Activated B cell treated with CpG ODN at 0.5 μM for 24 hours (primary cell): ENCODE measurements at regions of chr15 and their contacts with region 1.

Region 1: GRCh38 chr15:67080900-67081431 is 15.6 kb downstream of the SMAD3 start:
- DNase-seq: peak; percentile 69
- ATAC-seq: peak; percentile 70
- H3K4me3 Mint-ChIP-seq: peak overlapping the region; percentile 76
- H3K27ac Mint-ChIP-seq: peak overlapping the region; percentile 95
- H3K4me1 Mint-ChIP-seq: peaks cover 99% of the 10 kb centered on the region
- H3K27me3 Mint-ChIP-seq: no peaks in the 10 kb centered on the region
- CTCF ChIP-seq: no peak

Region 2: DNA sequence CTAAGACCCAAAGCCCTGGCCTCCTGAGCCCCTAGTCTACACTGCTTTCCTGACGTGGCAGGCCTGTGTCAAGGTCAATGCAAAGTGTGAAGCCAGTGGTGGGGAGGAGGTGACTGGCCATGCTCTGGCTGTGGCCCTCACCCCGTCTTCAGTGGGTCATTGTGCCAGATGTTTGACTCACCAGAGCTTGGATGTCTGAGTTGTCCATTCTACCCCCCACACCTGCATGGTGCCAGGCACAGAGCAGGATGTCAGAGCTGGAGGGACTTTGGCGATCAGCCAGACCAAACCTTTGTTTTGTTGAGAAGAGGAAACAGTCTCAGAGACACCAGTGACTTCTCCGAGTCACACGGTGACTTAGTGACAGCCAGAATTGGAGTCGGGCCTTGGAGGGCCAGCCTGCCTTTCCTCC is 329.4 kb before region 1 on chr15:
- CTCF ChIA-PET with region 1: no interaction called
- POLR2A ChIA-PET with region 1: no interaction called
- intact Hi-C with region 1: no loop called
- DNase-seq: no peak
- ATAC-seq: no peak
- H3K4me3 Mint-ChIP-seq: no peak overlapping the region
- H3K27ac Mint-ChIP-seq: no peak overlapping the region
- H3K4me1 Mint-ChIP-seq: peaks cover 5% of the 10 kb centered on the region
- H3K27me3 Mint-ChIP-seq: peaks cover 10% of the 10 kb centered on the region
- CTCF ChIP-seq: no peak

Region 3: GRCh38 chr15:66862878-66863335 is 218.1 kb before region 1 on chr15:
- CTCF ChIA-PET with region 1: interaction called, 3 read pairs
- POLR2A ChIA-PET with region 1: no interaction called
- intact Hi-C with region 1: loop called (anchors 10 kb)
- DNase-seq: peak; percentile 77
- ATAC-seq: peak; percentile 61
- H3K4me3 Mint-ChIP-seq: no peak overlapping the region
- H3K27ac Mint-ChIP-seq: peak overlapping the region; percentile 55
- H3K4me1 Mint-ChIP-seq: peaks cover 55% of the 10 kb centered on the region
- H3K27me3 Mint-ChIP-seq: no peaks in the 10 kb centered on the region
- CTCF ChIP-seq: peak; percentile 81

Region 4: DNA sequence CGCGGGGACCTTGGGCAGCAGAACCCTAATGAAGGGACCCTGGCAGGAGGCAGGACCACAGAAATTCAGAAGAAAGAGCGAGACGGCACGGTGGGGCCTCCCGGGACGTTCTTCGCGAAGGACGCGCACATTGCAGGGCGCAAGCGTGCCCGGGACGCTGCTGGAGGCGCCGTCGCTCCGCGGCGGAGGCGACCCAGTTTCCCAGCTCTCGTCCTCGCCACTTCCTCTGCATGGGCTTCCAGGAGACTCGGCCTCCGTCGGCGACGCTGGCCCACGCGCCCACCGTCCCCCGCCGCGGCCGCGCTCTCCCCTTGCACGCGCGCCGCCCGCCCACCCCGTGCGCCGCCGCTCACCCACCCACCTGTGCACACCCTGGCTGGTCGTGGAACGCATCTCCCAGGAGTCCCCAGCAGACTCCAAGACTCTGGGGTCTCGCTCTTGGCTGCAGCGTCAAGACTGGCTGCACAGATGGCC is 47.4 kb before region 1 on chr15:
- CTCF ChIA-PET with region 1: interaction called, 3 read pairs
- POLR2A ChIA-PET with region 1: interaction called, 3 read pairs
- intact Hi-C with region 1: loop called (anchors 5 kb)
- DNase-seq: no peak
- ATAC-seq: peak; percentile 59
- H3K4me3 Mint-ChIP-seq: peak overlapping the region; percentile 51
- H3K27ac Mint-ChIP-seq: no peak overlapping the region
- H3K4me1 Mint-ChIP-seq: peaks cover 26% of the 10 kb centered on the region
- H3K27me3 Mint-ChIP-seq: peaks cover 4% of the 10 kb centered on the region
- CTCF ChIP-seq: no peak

Region 5: DNA sequence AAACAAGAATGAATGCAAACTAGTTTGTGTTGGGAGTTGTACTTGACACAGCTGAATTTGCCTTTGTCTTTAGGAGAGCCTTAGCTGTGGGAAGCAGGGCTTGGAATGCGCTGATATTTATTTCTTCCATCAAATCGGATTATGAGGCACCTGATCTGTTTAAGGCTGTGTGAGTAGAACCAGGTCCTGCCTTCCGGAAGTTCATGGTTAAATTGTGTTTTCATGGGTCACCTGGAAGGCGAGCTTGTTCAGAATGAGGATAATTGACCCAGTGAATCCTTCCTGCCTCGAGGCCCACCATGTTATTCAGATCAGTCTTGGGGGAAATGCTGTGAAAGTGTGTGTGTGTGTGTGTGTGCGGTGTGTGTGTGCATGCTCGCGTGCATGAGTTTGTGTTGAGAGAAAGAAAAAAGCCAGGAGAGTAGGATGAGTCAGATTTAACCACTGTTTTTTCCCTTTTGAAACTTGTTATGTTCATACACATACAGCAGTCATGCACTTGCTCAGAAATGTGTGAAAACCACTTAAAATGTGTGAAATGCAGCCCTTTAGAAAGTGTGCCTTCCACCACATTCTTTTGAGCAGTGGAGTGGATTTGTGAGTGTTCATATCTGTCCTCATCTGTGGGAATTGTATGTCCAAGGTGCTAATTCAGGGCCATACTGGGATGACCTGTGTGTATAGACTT is 21.1 kb after region 1 on chr15:
- CTCF ChIA-PET with region 1: interaction called, 70 read pairs
- POLR2A ChIA-PET with region 1: interaction called, 1,703 read pairs
- intact Hi-C with region 1: loop called (anchors 1 kb)
- DNase-seq: no peak
- ATAC-seq: peak; percentile 41
- H3K4me3 Mint-ChIP-seq: no peak overlapping the region
- H3K27ac Mint-ChIP-seq: no peak overlapping the region
- H3K4me1 Mint-ChIP-seq: peaks cover 33% of the 10 kb centered on the region
- H3K27me3 Mint-ChIP-seq: no peaks in the 10 kb centered on the region
- CTCF ChIP-seq: no peak

Region 6: GRCh38 chr15:67164811-67165253 is 83.9 kb after region 1 on chr15:
- CTCF ChIA-PET with region 1: no interaction called
- POLR2A ChIA-PET with region 1: interaction called, 8 read pairs
- intact Hi-C with region 1: loop called (anchors 5 kb)
- DNase-seq: no peak
- ATAC-seq: no peak
- H3K4me3 Mint-ChIP-seq: no peak overlapping the region
- H3K27ac Mint-ChIP-seq: no peak overlapping the region
- H3K4me1 Mint-ChIP-seq: peaks cover 48% of the 10 kb centered on the region
- H3K27me3 Mint-ChIP-seq: no peaks in the 10 kb centered on the region
- CTCF ChIP-seq: no peak

Region 7: GRCh38 chr15:67303490-67304363 is 222.8 kb after region 1 on chr15:
- CTCF ChIA-PET with region 1: interaction called, 5 read pairs
- POLR2A ChIA-PET with region 1: interaction called, 5 read pairs
- intact Hi-C with region 1: loop called (anchors 1 kb)
- DNase-seq: no peak
- ATAC-seq: peak; percentile 56
- H3K4me3 Mint-ChIP-seq: no peak overlapping the region
- H3K27ac Mint-ChIP-seq: no peak overlapping the region
- H3K4me1 Mint-ChIP-seq: no peaks in the 10 kb centered on the region
- H3K27me3 Mint-ChIP-seq: no peaks in the 10 kb centered on the region
- CTCF ChIP-seq: no peak